Activated T-helper 2 cell treated with anti-CD3 and anti-CD28 coated beads, Interferon-gamma antibody, Interleukin-2, Interleukin-4, amounts not matched to agents 10 μg/mL and 5 μg/mL and 100 μg/mL, durations not matched to agents 14 hours and 24 hours and 36 hours (primary cell): ENCODE measurements at regions of chr11 and their contacts with region 1.

Region 1: GRCh38 chr11:46700241-46701077 is at the starts of genes ARHGAP1 and ZNF408:
- DNase-seq: peak; percentile 99
- H3K4me3 Mint-ChIP-seq: peak within 1 kb of the TSS; percentile 96
- H3K27ac Mint-ChIP-seq: peak within 1 kb of the TSS; percentile 92
- H3K4me1 Mint-ChIP-seq: peaks cover 28% of the 10 kb centered on the region
- H3K27me3 Mint-ChIP-seq: no peaks in the 10 kb centered on the region
- total RNA-seq, gene ARHGAP1: 58.8 and 66.8 TPM in 2 replicates
- total RNA-seq, gene ZNF408: 10.2 and 12.2 TPM in 2 replicates

Region 2: GRCh38 chr11:46389450-46390253 is 310.8 kb before region 1 on chr11:
- intact Hi-C with region 1: loop called (anchors 10 kb)
- DNase-seq: peak; percentile 50
- H3K4me3 Mint-ChIP-seq: peak overlapping the region; percentile 13
- H3K27ac Mint-ChIP-seq: no peak overlapping the region
- H3K4me1 Mint-ChIP-seq: peaks cover 18% of the 10 kb centered on the region
- H3K27me3 Mint-ChIP-seq: peaks cover 63% of the 10 kb centered on the region

Region 3: GRCh38 chr11:46845740-46846509 is 145.5 kb after region 1 on chr11 and contains the start of gene CKAP5:
- intact Hi-C with region 1: loop called (anchors 10 kb)
- DNase-seq: peak; percentile 83
- H3K4me3 Mint-ChIP-seq: peak within 1 kb of the TSS; percentile 96
- H3K27ac Mint-ChIP-seq: peak within 1 kb of the TSS; percentile 97
- H3K4me1 Mint-ChIP-seq: peaks cover 35% of the 10 kb centered on the region
- H3K27me3 Mint-ChIP-seq: no peaks in the 10 kb centered on the region
- total RNA-seq, gene CKAP5: 127 and 136 TPM in 2 replicates

Region 4: DNA sequence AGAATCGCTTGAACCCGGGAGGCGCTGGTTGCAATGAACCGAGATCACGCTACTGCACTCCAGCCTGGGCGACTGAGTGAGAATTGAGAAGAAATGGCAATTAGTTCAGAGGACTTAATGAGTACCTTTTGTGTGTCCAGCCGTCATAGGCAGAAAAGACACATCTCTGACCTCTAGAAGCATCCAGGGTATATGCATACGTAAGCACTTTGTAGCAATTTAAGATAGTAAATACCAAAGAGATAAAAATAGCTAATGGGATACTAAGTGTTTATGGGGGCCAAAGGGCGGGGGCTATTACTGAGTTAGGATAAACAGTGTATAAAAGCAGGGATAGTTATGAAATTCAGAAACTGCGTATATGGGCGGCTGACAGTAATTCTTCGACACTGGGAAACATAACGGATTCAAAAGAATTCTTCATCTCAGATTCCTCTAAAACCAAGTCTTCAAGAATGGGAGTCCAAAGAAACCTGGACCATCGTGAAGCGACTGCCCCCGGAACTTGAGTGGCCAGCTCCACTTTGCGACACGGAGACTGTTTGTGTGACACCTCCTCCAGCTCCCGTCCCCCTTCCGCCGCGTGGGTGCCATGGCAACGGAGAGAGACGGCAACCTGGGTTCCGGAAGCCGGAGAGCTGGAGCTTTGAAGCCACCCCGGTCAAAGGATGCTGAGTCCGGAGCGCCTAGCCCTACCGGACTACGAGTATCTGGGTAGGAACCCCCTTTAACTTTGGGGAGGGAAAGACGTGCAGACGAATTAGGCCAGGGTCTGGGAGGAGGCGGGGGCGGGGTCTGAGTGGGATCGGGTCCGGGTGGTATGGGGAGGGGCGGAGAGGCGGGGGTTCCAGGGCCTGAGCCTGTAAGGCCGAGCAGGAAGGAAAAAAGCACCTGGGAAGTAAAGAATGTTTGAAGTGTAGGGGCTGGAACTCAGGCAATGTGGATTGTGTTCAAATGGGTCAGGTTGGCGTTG is 236.0 kb after region 1 on chr11 and contains the start of gene CSTPP1:
- intact Hi-C with region 1: loop called (anchors 2 kb)
- DNase-seq: peak; percentile 87
- H3K4me3 Mint-ChIP-seq: peak within 1 kb of the TSS; percentile 96
- H3K27ac Mint-ChIP-seq: peak within 1 kb of the TSS; percentile 87
- H3K4me1 Mint-ChIP-seq: peaks cover 18% of the 10 kb centered on the region
- H3K27me3 Mint-ChIP-seq: peaks cover 4% of the 10 kb centered on the region
- total RNA-seq, gene CSTPP1: 17.8 and 19.0 TPM in 2 replicates